Activated CD4-positive, alpha-beta memory T cell treated with anti-CD3 and anti-CD28 coated beads for 36 hours (primary cell): ENCODE measurements at regions of chr6 and their contacts with region 1.

Region 1: DNA sequence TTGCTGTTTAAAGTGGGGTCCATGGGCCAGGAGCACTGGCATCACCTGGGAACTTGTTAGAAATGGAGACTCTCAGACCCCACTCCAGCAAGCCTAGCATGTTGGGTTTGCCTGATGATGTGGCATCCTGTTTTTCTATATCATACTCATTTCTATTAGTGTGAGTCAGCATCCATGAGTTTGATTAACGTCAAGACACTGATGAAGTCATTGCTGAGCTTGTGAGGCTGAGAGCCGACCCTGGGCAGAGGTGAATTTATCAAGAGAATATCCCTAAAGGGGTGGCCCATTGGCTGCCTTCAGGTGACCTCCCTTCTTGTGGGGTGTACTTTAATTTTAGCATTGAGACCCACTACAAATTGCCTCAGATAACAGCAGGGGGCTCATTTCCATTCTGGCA is 43.4 kb upstream of the RNF144B start:
- DNase-seq: peak; percentile 44
- H3K4me3 Mint-ChIP-seq: no peak overlapping the region
- H3K27ac Mint-ChIP-seq: peak overlapping the region; percentile 54
- H3K4me1 Mint-ChIP-seq: peaks cover 9% of the 10 kb centered on the region
- H3K27me3 Mint-ChIP-seq: peaks cover 6% of the 10 kb centered on the region

Region 2: GRCh38 chr6:18323935-18324705 is 19.6 kb before region 1 on chr6:
- CTCF ChIA-PET with region 1: interaction called, 7 read pairs
- POLR2A ChIA-PET with region 1: interaction called, 3 read pairs
- intact Hi-C with region 1: loop called (anchors 1 kb)
- DNase-seq: no peak
- H3K4me3 Mint-ChIP-seq: no peak overlapping the region
- H3K27ac Mint-ChIP-seq: no peak overlapping the region
- H3K4me1 Mint-ChIP-seq: peaks cover 8% of the 10 kb centered on the region
- H3K27me3 Mint-ChIP-seq: peaks cover 4% of the 10 kb centered on the region

Region 3: GRCh38 chr6:18387061-18387721 is 43.5 kb after region 1 on chr6 and contains the start of gene RNF144B:
- CTCF ChIA-PET with region 1: no interaction called
- POLR2A ChIA-PET with region 1: no interaction called
- intact Hi-C with region 1: loop called (anchors 5 kb)
- DNase-seq: peak; percentile 75
- H3K4me3 Mint-ChIP-seq: peak within 1 kb of the TSS; percentile 91
- H3K27ac Mint-ChIP-seq: peak within 1 kb of the TSS; percentile 46
- H3K4me1 Mint-ChIP-seq: peaks cover 28% of the 10 kb centered on the region
- H3K27me3 Mint-ChIP-seq: peaks cover 4% of the 10 kb centered on the region
- total RNA-seq, gene RNF144B: 2.1 to 2.9 TPM

Region 4: GRCh38 chr6:18400831-18401446 is 57.2 kb after region 1 on chr6:
- CTCF ChIA-PET with region 1: no interaction called
- POLR2A ChIA-PET with region 1: no interaction called
- intact Hi-C with region 1: loop called (anchors 2 kb)
- DNase-seq: no peak
- H3K4me3 Mint-ChIP-seq: no peak overlapping the region
- H3K27ac Mint-ChIP-seq: peak overlapping the region; percentile 55
- H3K4me1 Mint-ChIP-seq: peaks cover 11% of the 10 kb centered on the region
- H3K27me3 Mint-ChIP-seq: no peaks in the 10 kb centered on the region